ENCODE measurements at regions of chr6 and their contacts with region 1.

Region 1: GRCh38 chr6:169831450-169832246 is 80.2 kb downstream of the ERMARD start:
- DNase-seq: peak; percentile 77
- H3K4me3 ChIP-seq: no peak overlapping the region
- H3K27ac ChIP-seq: no peak overlapping the region
- H3K4me1 ChIP-seq: peaks cover 14% of the 10 kb centered on the region
- H3K27me3 ChIP-seq: peaks cover 0 to 1% of the 10 kb centered on the region in 2 experiments
- CTCF ChIP-seq: peak; percentile 85 to 93
- POLR2A ChIP-seq: no peak

Region 2: GRCh38 chr6:168616816-168617765 is 1214.6 kb before region 1 on chr6:
- CTCF ChIA-PET with region 1: no interaction called
- POLR2A ChIA-PET with region 1: no interaction called
- dilution Hi-C with region 1: no loop called
- intact Hi-C with region 1: no loop called
- DNase-seq: no peak
- H3K4me3 ChIP-seq: no peak overlapping the region
- H3K27ac ChIP-seq: no peak overlapping the region
- H3K4me1 ChIP-seq: no peaks in the 10 kb centered on the region
- H3K27me3 ChIP-seq: no peaks in the 10 kb centered on the region
- CTCF ChIP-seq: no peak
- POLR2A ChIP-seq: no peak

Region 3: GRCh38 chr6:169800668-169801395 is 30.8 kb before region 1 on chr6:
- CTCF ChIA-PET with region 1: interaction called, 44 read pairs
- POLR2A ChIA-PET with region 1: no interaction called
- dilution Hi-C with region 1: no loop called
- intact Hi-C with region 1: no loop called
- DNase-seq: no peak
- H3K4me3 ChIP-seq: no peak overlapping the region
- H3K27ac ChIP-seq: no peak overlapping the region
- H3K4me1 ChIP-seq: no peaks in the 10 kb centered on the region
- H3K27me3 ChIP-seq: peaks cover 0 to 16% of the 10 kb centered on the region in 2 experiments
- CTCF ChIP-seq: no peak
- POLR2A ChIP-seq: no peak

Region 4: DNA sequence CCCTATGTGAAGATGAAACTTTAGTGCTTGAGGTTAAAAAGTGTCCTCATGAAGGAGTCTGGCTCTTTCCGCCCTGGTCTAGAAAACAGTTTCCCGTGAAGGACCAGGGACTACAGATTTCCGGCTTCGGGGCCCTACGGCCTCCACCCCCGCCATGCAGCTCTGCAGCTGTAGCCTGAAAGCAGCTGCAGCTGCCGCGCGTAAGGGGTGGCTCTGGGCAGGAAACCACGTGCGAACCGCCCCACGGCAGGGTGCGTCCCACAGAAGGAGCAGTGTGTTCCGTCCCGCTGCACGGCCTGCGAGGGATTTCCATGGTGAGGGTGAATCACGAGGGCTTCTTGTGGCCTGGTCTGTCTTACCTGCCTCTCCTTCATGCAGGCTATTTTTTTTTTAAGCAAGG is 36.8 kb after region 1 on chr6:
- CTCF ChIA-PET with region 1: interaction called, 14 read pairs
- POLR2A ChIA-PET with region 1: no interaction called
- dilution Hi-C with region 1: no loop called
- intact Hi-C with region 1: no loop called
- DNase-seq: no peak
- H3K4me3 ChIP-seq: no peak overlapping the region
- H3K27ac ChIP-seq: no peak overlapping the region
- H3K4me1 ChIP-seq: no peaks in the 10 kb centered on the region
- H3K27me3 ChIP-seq: no peaks in the 10 kb centered on the region
- CTCF ChIP-seq: no peak
- POLR2A ChIP-seq: no peak

Region 5: DNA sequence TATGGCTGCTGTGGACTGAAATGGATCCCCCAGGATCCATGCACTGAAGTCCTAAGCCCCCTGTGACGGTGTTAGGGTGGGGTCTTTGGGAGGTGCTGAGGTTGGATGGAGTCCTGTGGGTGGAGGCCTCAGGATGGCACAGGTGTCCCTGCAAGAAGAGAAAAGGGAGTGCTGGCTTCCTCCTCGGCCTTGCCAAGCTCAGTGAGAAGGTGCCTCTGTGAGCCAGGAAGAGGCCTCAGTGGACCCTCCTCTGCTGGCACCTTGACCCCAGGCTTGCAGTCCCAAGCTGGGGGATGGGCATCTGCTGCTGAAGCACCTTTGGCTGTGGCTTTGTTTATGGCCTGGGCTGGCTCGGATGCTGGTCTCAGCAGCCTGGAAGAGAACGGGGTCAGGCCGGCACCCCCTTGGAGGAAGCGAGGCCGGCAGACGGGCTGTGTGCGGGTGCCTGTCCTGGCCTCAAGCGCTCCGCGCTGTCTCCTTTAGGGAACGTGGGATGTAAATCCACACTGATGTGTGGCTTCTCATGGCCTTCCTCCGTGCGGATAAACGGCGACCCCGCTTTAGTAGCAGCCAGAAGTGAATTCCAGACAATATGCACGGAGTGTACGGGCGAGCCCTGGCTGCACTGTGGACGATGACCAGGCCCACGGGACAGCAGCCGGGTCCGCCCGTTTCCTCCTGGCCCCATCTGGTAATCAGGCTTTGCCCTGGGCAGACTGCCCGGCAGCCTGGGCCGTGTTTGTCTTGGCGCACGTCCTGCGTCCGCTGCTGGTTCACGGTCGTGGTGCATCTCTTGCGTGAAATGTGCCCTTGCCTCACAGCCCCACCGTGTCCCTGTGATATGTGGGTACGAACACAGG is 102.4 kb after region 1 on chr6:
- CTCF ChIA-PET with region 1: interaction called, 53 read pairs
- POLR2A ChIA-PET with region 1: no interaction called
- dilution Hi-C with region 1: no loop called
- intact Hi-C with region 1: loop called (anchors 1 kb)
- DNase-seq: peak; percentile 96
- H3K4me3 ChIP-seq: no peak overlapping the region
- H3K27ac ChIP-seq: peak overlapping the region; percentile 88
- H3K4me1 ChIP-seq: peaks cover 25% of the 10 kb centered on the region
- H3K27me3 ChIP-seq: no peaks in the 10 kb centered on the region
- CTCF ChIP-seq: no peak
- POLR2A ChIP-seq: peak; percentile 52

Region 6: DNA sequence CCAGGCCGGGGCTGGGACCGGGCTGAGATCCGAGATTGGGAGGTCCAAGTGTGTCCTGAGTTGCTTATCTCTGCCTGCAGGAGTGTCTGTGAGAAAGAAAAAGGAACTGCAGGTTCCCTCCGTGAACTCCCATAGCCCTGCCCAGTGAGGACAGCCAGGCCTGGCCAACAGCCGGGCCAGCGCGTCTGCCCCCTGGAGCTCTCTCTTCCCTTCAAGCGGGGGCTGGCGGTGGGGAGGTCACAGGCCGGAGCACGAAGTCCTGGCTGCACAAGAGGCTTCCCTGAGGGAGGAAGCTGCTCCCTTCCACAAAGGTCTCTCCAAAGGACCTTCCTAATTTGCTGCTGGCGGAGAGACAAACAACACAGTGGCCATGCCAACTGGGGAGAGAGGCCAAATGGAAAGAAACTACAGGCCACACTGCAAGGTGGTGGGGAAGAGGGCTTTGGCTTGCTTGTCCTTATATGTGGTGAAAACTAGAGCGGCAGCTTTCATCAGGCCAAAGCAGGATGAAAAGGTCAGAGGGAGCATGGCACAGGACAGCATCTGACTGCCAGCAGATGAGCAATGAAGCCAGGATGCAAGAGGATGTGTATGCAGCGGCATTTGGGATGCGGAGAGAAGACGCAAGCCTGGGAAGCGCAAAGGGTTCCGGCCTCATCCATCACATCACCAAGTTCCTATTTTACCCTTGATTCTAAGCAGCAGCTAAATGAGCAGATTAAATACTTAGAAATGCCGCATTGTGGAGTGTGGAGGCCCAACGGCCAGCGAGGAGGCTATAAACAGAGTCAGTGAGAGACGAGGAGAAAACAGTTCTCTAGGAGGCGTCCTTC is 179.8 kb after region 1 on chr6:
- CTCF ChIA-PET with region 1: interaction called, 13 read pairs
- POLR2A ChIA-PET with region 1: no interaction called
- dilution Hi-C with region 1: no loop called
- intact Hi-C with region 1: no loop called
- DNase-seq: peak; percentile 59
- H3K4me3 ChIP-seq: no peak overlapping the region
- H3K27ac ChIP-seq: no peak overlapping the region
- H3K4me1 ChIP-seq: no peaks in the 10 kb centered on the region
- H3K27me3 ChIP-seq: peaks cover 19 to 35% of the 10 kb centered on the region in 2 experiments
- CTCF ChIP-seq: no peak
- POLR2A ChIP-seq: no peak

Region 7: GRCh38 chr6:170290306-170291128 is 458.9 kb after region 1 on chr6 and contains the start of gene DLL1:
- CTCF ChIA-PET with region 1: interaction called, 62 read pairs
- POLR2A ChIA-PET with region 1: no interaction called
- dilution Hi-C with region 1: no loop called
- intact Hi-C with region 1: loop called (anchors 2 kb)
- DNase-seq: peak; percentile 52
- H3K4me3 ChIP-seq: peak within 1 kb of the TSS; percentile 60 to 82 (median 73)
- H3K27ac ChIP-seq: no peak within 1 kb of the TSS
- H3K4me1 ChIP-seq: peaks cover 24% of the 10 kb centered on the region
- H3K27me3 ChIP-seq: peaks cover 35 to 66% of the 10 kb centered on the region in 2 experiments
- CTCF ChIP-seq: no peak
- POLR2A ChIP-seq: peak; percentile 12
- total RNA-seq, gene DLL1: 2.0 and 2.3 TPM in 2 replicates

Region 8: GRCh38 chr6:170516783-170517616 is 685.4 kb after region 1 on chr6:
- CTCF ChIA-PET with region 1: interaction called, 120 read pairs
- POLR2A ChIA-PET with region 1: no interaction called
- dilution Hi-C with region 1: no loop called
- intact Hi-C with region 1: loop called (anchors 1 kb)
- DNase-seq: peak; percentile 59
- H3K4me3 ChIP-seq: no peak overlapping the region
- H3K27ac ChIP-seq: no peak overlapping the region
- H3K4me1 ChIP-seq: no peaks in the 10 kb centered on the region
- H3K27me3 ChIP-seq: peaks cover 2 to 7% of the 10 kb centered on the region in 2 experiments
- CTCF ChIP-seq: peak; percentile 60 to 76
- POLR2A ChIP-seq: no peak

Measured in endothelial cell of umbilical vein (primary cell).